ENCODE measurements at regions of chrX and their contacts with region 1.

Region 1: DNA sequence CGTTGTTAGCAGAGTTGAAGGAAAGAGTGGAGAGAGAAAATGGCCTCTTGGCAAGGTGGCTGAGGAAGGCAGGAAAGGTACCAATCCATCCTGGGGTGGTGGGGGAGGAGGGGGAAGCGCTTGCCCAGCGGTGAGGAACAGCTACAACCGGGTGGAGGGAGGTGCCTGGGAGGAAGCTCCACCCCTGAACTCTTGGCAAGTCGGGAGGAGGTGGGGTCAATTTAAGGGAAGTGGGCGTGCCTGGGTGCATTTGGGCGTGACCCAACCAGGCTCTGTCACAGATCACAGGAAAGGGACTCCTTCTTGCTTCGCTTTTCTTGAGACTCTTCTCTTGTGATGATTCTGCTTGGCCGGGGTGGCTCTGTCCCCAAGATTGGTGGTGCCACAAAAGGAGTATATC is 41.7 kb downstream of the BCORL1 start:
- DNase-seq: peak; percentile 56 to 80
- H3K4me3 ChIP-seq: no peak overlapping the region
- H3K27ac ChIP-seq: no peak overlapping the region
- H3K4me1 ChIP-seq: peaks cover 0 to 5% (median 1%) of the 10 kb centered on the region in 4 experiments; a peak in 3 of 7 replicates
- H3K27me3 ChIP-seq: no peaks in the 10 kb centered on the region
- CTCF ChIP-seq: no peak
- EP300 ChIP-seq: no peak
- POLR2A ChIP-seq: no peak
- RAD21 ChIP-seq: no peak

Region 2: GRCh38 chrX:129925305-129926092 is 98.6 kb before region 1 on chrX:
- CTCF ChIA-PET with region 1: interaction called, 12 read pairs
- POLR2A ChIA-PET with region 1: interaction called, 3 read pairs
- DNase-seq: peak; percentile 23 to 71
- H3K4me3 ChIP-seq: no peak overlapping the region
- H3K27ac ChIP-seq: no peak overlapping the region
- H3K4me1 ChIP-seq: no peaks in the 10 kb centered on the region
- H3K27me3 ChIP-seq: no peaks in the 10 kb centered on the region
- CTCF ChIP-seq: peak; percentile 48 to 64 (median 62)
- EP300 ChIP-seq: no peak
- POLR2A ChIP-seq: no peak
- RAD21 ChIP-seq: peak; percentile 72 to 76

Region 3: DNA sequence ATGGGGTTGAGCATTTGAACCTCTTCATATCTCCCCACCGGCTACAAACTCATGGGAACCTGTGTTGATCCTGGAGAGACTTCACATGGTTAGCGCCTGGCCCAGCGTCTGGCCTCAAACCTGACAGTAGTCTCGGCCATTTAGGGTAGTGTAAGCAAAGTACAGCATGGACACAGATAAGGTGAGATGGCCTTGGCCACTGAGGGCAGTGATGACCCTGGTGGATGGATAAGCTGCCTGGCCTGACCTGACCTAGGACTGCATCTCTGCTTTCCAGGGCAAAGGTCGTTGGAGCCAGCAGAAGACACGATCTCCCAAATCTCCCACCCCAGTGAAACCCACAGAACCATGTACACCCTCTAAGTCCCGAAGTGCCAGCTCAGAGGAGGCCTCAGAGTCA is 10.1 kb after region 1 on chrX:
- CTCF ChIA-PET with region 1: interaction called, 77 read pairs
- POLR2A ChIA-PET with region 1: no interaction called
- DNase-seq: no peak
- H3K4me3 ChIP-seq: no peak overlapping the region
- H3K27ac ChIP-seq: no peak overlapping the region
- H3K4me1 ChIP-seq: peaks cover 0 to 8% (median 0%) of the 10 kb centered on the region in 4 experiments; a peak in 1 of 7 replicates
- H3K27me3 ChIP-seq: no peaks in the 10 kb centered on the region
- CTCF ChIP-seq: no peak
- EP300 ChIP-seq: no peak
- POLR2A ChIP-seq: no peak
- RAD21 ChIP-seq: no peak

Region 4: DNA sequence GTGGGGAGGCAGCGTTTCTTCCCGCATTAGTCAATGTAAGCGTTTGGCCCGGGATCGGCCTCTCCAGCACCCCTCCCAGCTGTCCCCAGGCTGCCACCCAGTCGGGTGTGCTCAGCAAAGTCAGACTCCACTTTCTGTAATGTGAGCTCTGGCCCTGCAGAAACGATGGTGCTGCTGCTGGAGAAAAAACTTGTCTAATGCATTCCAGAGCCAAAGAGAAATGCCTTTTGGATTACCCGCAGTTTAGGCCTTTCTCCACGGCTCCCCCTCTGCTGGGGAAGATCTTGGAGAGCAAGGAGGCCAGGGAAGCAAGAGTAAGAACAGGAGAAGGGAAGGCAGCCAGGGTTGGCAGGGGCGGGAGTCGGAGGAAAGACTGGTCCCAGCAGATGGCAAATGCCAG is 31.0 kb after region 1 on chrX:
- CTCF ChIA-PET with region 1: interaction called, 23 read pairs
- POLR2A ChIA-PET with region 1: interaction called, 3 read pairs
- DNase-seq: no peak
- H3K4me3 ChIP-seq: no peak overlapping the region
- H3K27ac ChIP-seq: no peak overlapping the region; the same call in 1 of the 2 replicates
- H3K4me1 ChIP-seq: peaks cover 0 to 12% (median 4%) of the 10 kb centered on the region in 4 experiments; a peak in 4 of 7 replicates
- H3K27me3 ChIP-seq: peaks cover 2 to 17% (median 12%) of the 10 kb centered on the region in 4 experiments
- CTCF ChIP-seq: no peak
- EP300 ChIP-seq: no peak
- POLR2A ChIP-seq: no peak
- RAD21 ChIP-seq: no peak

Region 5: GRCh38 chrX:130066975-130067615 is 43.0 kb after region 1 on chrX:
- CTCF ChIA-PET with region 1: interaction called, 10 read pairs
- POLR2A ChIA-PET with region 1: no interaction called
- DNase-seq: no peak
- H3K4me3 ChIP-seq: no peak overlapping the region
- H3K27ac ChIP-seq: no peak overlapping the region
- H3K4me1 ChIP-seq: peaks cover 0 to under 1% (median 0%) of the 10 kb centered on the region in 4 experiments; a peak in 1 of 7 replicates
- H3K27me3 ChIP-seq: no peaks in the 10 kb centered on the region
- CTCF ChIP-seq: no peak
- EP300 ChIP-seq: no peak
- POLR2A ChIP-seq: no peak
- RAD21 ChIP-seq: no peak

Region 6: GRCh38 chrX:130170752-130171445 is 146.8 kb after region 1 on chrX:
- CTCF ChIA-PET with region 1: no interaction called
- POLR2A ChIA-PET with region 1: no interaction called
- DNase-seq: peak in 1 of 2 experiments; percentile 71
- H3K4me3 ChIP-seq: peak overlapping the region; percentile 53 to 75 (median 64)
- H3K27ac ChIP-seq: no peak overlapping the region; the same call in 1 of the 2 replicates
- H3K4me1 ChIP-seq: peaks cover 0 to 6% (median 0%) of the 10 kb centered on the region in 4 experiments; a peak in 4 of 7 replicates
- H3K27me3 ChIP-seq: peaks cover 0 to 11% (median 9%) of the 10 kb centered on the region in 4 experiments; a peak in 6 of 7 replicates
- CTCF ChIP-seq: no peak
- EP300 ChIP-seq: no peak
- POLR2A ChIP-seq: no peak
- RAD21 ChIP-seq: no peak